Calu3 (cell line): ENCODE measurements at regions of chr11 and their contacts with region 1.

Region 1: GRCh38 chr11:92886243-92886905 is 83.1 kb upstream of the MTNR1B start:
- DNase-seq: peak; percentile 44
- H3K4me3 Mint-ChIP-seq: no peak overlapping the region
- H3K27ac Mint-ChIP-seq: no peak overlapping the region
- H3K4me1 Mint-ChIP-seq: no peaks in the 10 kb centered on the region
- H3K27me3 Mint-ChIP-seq: no peaks in the 10 kb centered on the region
- CTCF ChIP-seq: no peak

Region 2: DNA sequence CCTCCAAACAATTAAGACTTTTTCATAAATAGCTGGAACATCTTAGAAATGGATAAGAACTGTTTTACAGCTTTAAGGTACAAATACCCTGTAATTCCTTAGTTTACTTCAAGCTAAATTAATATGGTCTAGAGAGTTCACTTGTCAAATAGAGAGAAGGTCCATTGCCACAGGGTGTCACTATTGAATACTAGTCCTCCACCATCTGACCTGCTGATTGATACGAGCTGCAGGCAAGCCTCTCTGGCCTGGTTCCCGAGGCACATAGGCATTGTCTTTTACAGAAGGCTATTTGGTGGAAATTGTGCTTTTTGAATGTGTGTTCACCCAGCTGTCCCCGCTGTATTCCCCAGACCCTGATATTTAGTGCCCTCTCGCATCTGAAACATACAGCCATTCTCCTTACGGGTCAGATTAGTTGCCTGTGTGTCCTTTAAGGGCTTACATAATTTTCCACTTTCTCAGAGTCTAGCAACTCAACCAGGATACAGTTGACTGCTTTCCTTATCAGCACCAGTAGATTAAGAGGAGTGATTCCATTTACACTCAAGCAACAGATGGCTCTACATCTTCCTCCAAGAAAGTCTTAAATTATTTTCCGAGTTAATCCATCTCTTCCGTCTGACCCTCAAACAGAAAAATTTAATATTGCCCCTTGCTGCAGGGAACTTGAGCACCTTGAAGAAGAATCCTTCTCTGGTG is 1450.5 kb before region 1 on chr11:
- CTCF ChIA-PET with region 1: no interaction called
- intact Hi-C with region 1: loop called (anchors 10 kb)
- DNase-seq: no peak
- H3K4me3 Mint-ChIP-seq: no peak overlapping the region
- H3K27ac Mint-ChIP-seq: no peak overlapping the region
- H3K4me1 Mint-ChIP-seq: no peaks in the 10 kb centered on the region
- H3K27me3 Mint-ChIP-seq: no peaks in the 10 kb centered on the region
- CTCF ChIP-seq: no peak